Activated CD4-positive, alpha-beta T cell treated with anti-CD3 and anti-CD28 coated beads for 36 hours (primary cell): ENCODE measurements at regions of chr4 and their contacts with region 1.

Region 1: DNA sequence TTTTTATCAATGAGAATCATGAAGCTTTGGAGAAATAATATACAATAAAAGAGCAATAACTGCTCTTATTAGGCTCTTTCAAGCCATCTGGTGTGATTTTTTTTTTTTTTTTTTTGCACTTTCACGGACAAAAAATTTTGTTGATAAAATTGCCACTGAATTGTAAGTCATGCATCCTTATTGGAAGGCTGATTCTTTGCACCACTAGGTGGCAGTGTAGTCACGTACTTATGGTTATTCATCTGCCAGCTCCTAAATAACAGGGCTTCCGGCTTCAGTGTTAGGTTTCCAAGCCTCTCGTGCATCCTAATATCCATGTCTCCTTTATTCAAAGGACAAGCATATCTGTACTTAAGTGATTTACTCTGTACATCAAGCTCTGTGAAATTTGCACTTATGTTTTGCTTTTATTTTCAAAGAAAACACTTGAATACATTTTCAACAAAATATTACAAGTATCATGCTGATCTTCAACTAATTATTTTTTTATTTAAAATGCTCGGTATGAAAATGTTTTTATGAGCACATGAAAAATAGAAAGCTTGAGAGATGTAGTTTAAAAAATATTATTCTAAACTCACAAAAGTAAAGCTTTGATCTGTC is 1578.3 kb upstream of the TENM3 start:
- DNase-seq: peak; percentile 72
- ATAC-seq: peak; percentile 51
- H3K4me3 Mint-ChIP-seq: no peak overlapping the region
- H3K27ac Mint-ChIP-seq: no peak overlapping the region
- H3K4me1 Mint-ChIP-seq: no peaks in the 10 kb centered on the region
- H3K27me3 Mint-ChIP-seq: no peaks in the 10 kb centered on the region

Region 2: GRCh38 chr4:179867300-179867878 is 797.5 kb before region 1 on chr4:
- CTCF ChIA-PET with region 1: interaction called, 4 read pairs
- POLR2A ChIA-PET with region 1: no interaction called
- intact Hi-C with region 1: loop called in 1 of 2 experiments (anchors 2 kb)
- DNase-seq: peak; percentile 55
- ATAC-seq: peak; percentile 60
- H3K4me3 Mint-ChIP-seq: no peak overlapping the region
- H3K27ac Mint-ChIP-seq: no peak overlapping the region
- H3K4me1 Mint-ChIP-seq: no peaks in the 10 kb centered on the region
- H3K27me3 Mint-ChIP-seq: no peaks in the 10 kb centered on the region

Region 3: GRCh38 chr4:180947425-180947824 is 282.6 kb after region 1 on chr4:
- CTCF ChIA-PET with region 1: no interaction called
- POLR2A ChIA-PET with region 1: no interaction called
- intact Hi-C with region 1: loop called in 1 of 2 experiments (anchors 10 kb)
- DNase-seq: no peak
- ATAC-seq: no peak
- H3K4me3 Mint-ChIP-seq: no peak overlapping the region
- H3K27ac Mint-ChIP-seq: no peak overlapping the region
- H3K4me1 Mint-ChIP-seq: no peaks in the 10 kb centered on the region
- H3K27me3 Mint-ChIP-seq: no peaks in the 10 kb centered on the region

Region 4: GRCh38 chr4:181143250-181143854 is 478.5 kb after region 1 on chr4:
- CTCF ChIA-PET with region 1: no interaction called
- POLR2A ChIA-PET with region 1: no interaction called
- intact Hi-C with region 1: loop called in 1 of 2 experiments (anchors 10 kb)
- DNase-seq: peak; percentile 84
- ATAC-seq: peak; percentile 60
- H3K4me3 Mint-ChIP-seq: no peak overlapping the region
- H3K27ac Mint-ChIP-seq: no peak overlapping the region
- H3K4me1 Mint-ChIP-seq: no peaks in the 10 kb centered on the region
- H3K27me3 Mint-ChIP-seq: peaks cover 5% of the 10 kb centered on the region